B cell (primary cell): ENCODE measurements at regions of chr7 and their contacts with region 1.

Region 1: DNA sequence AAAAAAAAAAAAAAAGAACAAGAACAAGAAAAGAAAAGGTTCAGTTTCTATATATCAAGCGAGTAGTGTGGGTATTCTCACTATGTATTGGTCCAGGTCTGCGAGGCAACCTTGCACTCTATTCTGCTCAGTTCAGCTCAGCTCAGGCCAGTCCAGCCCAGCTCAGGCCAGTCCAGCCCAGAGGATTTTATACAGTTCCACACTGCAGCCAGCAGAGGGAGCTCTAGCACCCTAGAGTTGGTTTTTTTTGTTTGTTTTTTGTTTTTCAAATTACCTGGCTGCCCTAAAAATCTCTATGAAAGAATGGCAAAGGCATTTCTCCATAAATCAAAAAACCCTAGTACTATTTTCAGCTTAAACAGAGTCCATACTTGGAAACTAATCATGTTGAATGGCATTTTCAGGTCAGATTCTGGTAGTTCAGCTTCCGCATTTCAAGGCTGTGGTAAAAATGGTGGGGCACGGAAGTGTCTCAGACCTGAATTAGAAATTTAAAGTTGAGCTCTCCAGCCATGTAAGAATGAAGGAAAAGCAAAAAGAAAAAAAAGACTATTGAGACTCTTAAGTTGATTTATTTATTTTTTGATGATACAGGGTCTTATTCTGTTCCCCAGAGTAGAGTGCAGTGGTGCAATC is 55.2 kb upstream of the GSDME start:
- DNase-seq: peak; percentile 70
- ATAC-seq: peak; percentile 67
- H3K4me3 ChIP-seq: no peak overlapping the region
- H3K4me3 Mint-ChIP-seq: no peak overlapping the region
- H3K27ac ChIP-seq: no peak overlapping the region
- H3K27ac Mint-ChIP-seq: no peak overlapping the region
- H3K4me1 ChIP-seq: no peaks in the 10 kb centered on the region
- H3K4me1 Mint-ChIP-seq: no peaks in the 10 kb centered on the region
- H3K27me3 ChIP-seq: no peaks in the 10 kb centered on the region
- H3K27me3 Mint-ChIP-seq: no peaks in the 10 kb centered on the region
- CTCF ChIP-seq: peak; percentile 96

Region 2: GRCh38 chr7:24715661-24716479 is 96.6 kb before region 1 on chr7:
- CTCF ChIA-PET with region 1: interaction called, 14 read pairs
- POLR2A ChIA-PET with region 1: no interaction called
- intact Hi-C with region 1: no loop called
- DNase-seq: peak; percentile 56
- ATAC-seq: no peak
- H3K4me3 ChIP-seq: peak overlapping the region in 1 of 5 experiments; percentile 9
- H3K4me3 Mint-ChIP-seq: peak overlapping the region; percentile 68
- H3K27ac ChIP-seq: no peak overlapping the region
- H3K27ac Mint-ChIP-seq: no peak overlapping the region
- H3K4me1 ChIP-seq: peaks cover 52 to 55% of the 10 kb centered on the region in 2 donors
- H3K4me1 Mint-ChIP-seq: peaks cover 61% of the 10 kb centered on the region
- H3K27me3 ChIP-seq: no peaks in the 10 kb centered on the region
- H3K27me3 Mint-ChIP-seq: no peaks in the 10 kb centered on the region
- CTCF ChIP-seq: peak; percentile 56

Region 3: GRCh38 chr7:24825931-24826661 is 13.7 kb after region 1 on chr7:
- CTCF ChIA-PET with region 1: interaction called, 40 read pairs
- POLR2A ChIA-PET with region 1: interaction called, 3 read pairs
- intact Hi-C with region 1: no loop called
- DNase-seq: no peak
- ATAC-seq: no peak
- H3K4me3 ChIP-seq: no peak overlapping the region
- H3K4me3 Mint-ChIP-seq: no peak overlapping the region
- H3K27ac ChIP-seq: no peak overlapping the region
- H3K27ac Mint-ChIP-seq: peak overlapping the region; percentile 37
- H3K4me1 ChIP-seq: peaks cover 33 to 37% of the 10 kb centered on the region in 2 donors
- H3K4me1 Mint-ChIP-seq: peaks cover 61% of the 10 kb centered on the region
- H3K27me3 ChIP-seq: no peaks in the 10 kb centered on the region
- H3K27me3 Mint-ChIP-seq: no peaks in the 10 kb centered on the region
- CTCF ChIP-seq: no peak

Region 4: DNA sequence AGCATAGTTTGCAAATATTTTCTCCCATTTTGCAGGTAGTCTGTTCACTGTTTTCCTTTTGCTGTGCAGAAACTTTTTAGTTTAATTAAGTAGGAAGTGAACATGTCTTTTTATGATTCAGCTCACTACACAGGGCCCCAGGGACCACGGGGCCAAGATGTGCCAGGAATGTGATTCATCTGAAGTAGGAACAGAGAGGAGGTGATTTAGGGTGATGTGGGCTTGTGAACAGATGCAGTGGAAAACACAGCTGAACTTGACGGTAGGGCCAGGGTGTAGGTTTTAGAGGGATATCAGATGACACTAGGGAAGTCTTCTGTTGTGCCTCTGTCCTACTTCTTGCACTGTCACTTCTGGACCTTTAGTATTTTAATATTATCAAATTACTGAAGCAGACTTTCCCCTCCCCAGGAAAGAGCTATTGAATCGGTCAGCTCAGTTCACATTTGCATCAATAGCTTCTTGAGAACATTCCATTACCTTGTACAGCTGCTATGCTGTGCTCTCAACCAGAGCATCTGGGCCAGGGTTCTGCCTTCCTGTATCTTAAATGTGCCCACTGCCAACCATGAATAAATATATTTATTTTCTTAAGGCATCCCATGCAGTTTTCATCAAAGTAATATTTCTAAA is 70.7 kb after region 1 on chr7:
- CTCF ChIA-PET with region 1: interaction called, 17 read pairs
- POLR2A ChIA-PET with region 1: no interaction called
- intact Hi-C with region 1: no loop called
- DNase-seq: no peak
- ATAC-seq: peak; percentile 32
- H3K4me3 ChIP-seq: no peak overlapping the region
- H3K4me3 Mint-ChIP-seq: peak overlapping the region; percentile 0
- H3K27ac ChIP-seq: no peak overlapping the region
- H3K27ac Mint-ChIP-seq: no peak overlapping the region
- H3K4me1 ChIP-seq: peaks cover 17 to 18% of the 10 kb centered on the region in 2 donors
- H3K4me1 Mint-ChIP-seq: peaks cover 32% of the 10 kb centered on the region
- H3K27me3 ChIP-seq: no peaks in the 10 kb centered on the region
- H3K27me3 Mint-ChIP-seq: no peaks in the 10 kb centered on the region
- CTCF ChIP-seq: no peak

Region 5: GRCh38 chr7:24979863-24980533 is 167.6 kb after region 1 on chr7 and contains the start of gene OSBPL3:
- CTCF ChIA-PET with region 1: interaction called, 42 read pairs
- POLR2A ChIA-PET with region 1: no interaction called
- intact Hi-C with region 1: no loop called
- DNase-seq: peak; percentile 96
- ATAC-seq: peak; percentile 89
- H3K4me3 ChIP-seq: peak within 1 kb of the TSS; percentile 73 to 97 (median 87)
- H3K4me3 Mint-ChIP-seq: peak within 1 kb of the TSS; percentile 95
- H3K27ac ChIP-seq: peak within 1 kb of the TSS; percentile 55 to 78
- H3K27ac Mint-ChIP-seq: peak within 1 kb of the TSS; percentile 96
- H3K4me1 ChIP-seq: peaks cover 17 to 27% of the 10 kb centered on the region in 2 donors
- H3K4me1 Mint-ChIP-seq: peaks cover 52% of the 10 kb centered on the region
- H3K27me3 ChIP-seq: no peaks in the 10 kb centered on the region
- H3K27me3 Mint-ChIP-seq: no peaks in the 10 kb centered on the region
- CTCF ChIP-seq: no peak
- total RNA-seq, gene OSBPL3: 67.6 and 80.6 TPM in 2 replicates

Region 6: DNA sequence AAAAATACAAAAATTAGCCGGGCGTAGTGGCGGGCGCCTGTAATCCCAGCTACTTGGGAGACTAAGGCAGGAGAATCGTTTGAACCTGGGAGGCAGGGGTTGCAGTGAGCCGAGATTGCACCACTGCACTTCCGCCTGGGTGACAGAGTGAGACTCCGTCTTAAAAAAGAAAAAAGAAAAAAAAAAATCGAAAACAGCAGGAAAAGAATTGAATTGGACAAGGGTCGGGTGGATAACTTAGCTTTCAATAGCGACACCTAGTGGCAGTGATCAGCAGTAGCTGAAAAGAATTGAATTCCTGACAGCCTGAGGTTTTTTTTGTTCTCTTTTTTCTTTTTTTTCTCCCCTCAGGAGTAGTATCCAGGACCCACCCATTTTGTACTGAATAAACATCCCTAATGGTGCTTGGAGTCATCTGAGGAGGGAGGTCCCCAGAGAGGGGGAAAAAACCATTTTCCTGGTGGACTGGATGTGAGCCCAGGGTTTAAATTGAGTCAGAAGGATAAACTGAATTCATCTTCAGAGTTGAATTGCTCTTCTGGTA is 257.5 kb after region 1 on chr7:
- CTCF ChIA-PET with region 1: interaction called, 246 read pairs
- POLR2A ChIA-PET with region 1: no interaction called
- intact Hi-C with region 1: loop called (anchors 1 kb)
- DNase-seq: peak; percentile 76
- ATAC-seq: peak; percentile 51
- H3K4me3 ChIP-seq: no peak overlapping the region
- H3K4me3 Mint-ChIP-seq: no peak overlapping the region
- H3K27ac ChIP-seq: no peak overlapping the region
- H3K27ac Mint-ChIP-seq: no peak overlapping the region
- H3K4me1 ChIP-seq: peaks cover 0 to 2% of the 10 kb centered on the region in 2 donors
- H3K4me1 Mint-ChIP-seq: peaks cover 2% of the 10 kb centered on the region
- H3K27me3 ChIP-seq: no peaks in the 10 kb centered on the region
- H3K27me3 Mint-ChIP-seq: no peaks in the 10 kb centered on the region
- CTCF ChIP-seq: peak; percentile 95

Region 7: DNA sequence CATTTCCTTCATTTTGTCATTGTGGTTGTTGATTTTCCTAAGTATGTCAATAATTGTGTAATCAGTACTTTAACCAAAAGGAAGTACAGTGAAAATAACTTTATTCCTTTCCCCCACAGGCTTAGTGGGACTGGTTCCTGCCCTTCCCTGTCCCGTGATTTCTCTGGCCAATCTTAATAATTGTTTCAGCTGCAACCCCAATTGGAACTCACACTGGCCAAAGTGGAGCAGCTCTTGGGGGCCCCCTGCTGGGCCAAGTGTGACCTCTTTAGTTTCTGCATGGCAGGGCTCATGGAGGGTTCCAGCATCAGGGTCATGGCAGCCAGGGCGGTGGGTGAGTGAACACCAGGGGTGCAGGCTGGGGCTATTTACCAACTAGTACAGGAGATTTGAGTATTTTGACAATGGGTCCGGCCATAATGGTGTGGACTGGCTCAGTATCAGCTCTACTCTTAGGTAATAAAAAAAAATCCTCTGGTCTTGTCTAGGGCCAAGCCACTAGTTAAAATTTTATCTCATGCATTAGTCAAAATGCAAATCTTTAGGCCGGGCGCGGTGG is 280.9 kb after region 1 on chr7:
- CTCF ChIA-PET with region 1: interaction called, 354 read pairs
- POLR2A ChIA-PET with region 1: no interaction called
- intact Hi-C with region 1: loop called (anchors 1 kb)
- DNase-seq: peak; percentile 77
- ATAC-seq: peak; percentile 87
- H3K4me3 ChIP-seq: no peak overlapping the region
- H3K4me3 Mint-ChIP-seq: no peak overlapping the region
- H3K27ac ChIP-seq: no peak overlapping the region
- H3K27ac Mint-ChIP-seq: no peak overlapping the region
- H3K4me1 ChIP-seq: peaks cover 0 to 7% of the 10 kb centered on the region in 2 donors
- H3K4me1 Mint-ChIP-seq: peaks cover 6% of the 10 kb centered on the region
- H3K27me3 ChIP-seq: no peaks in the 10 kb centered on the region
- H3K27me3 Mint-ChIP-seq: no peaks in the 10 kb centered on the region
- CTCF ChIP-seq: peak; percentile 75